ENCODE measurements at regions of chr1 and their contacts with region 1.

Region 1: GRCh38 chr1:110412576-110412975 is 5.1 kb upstream of the LAMTOR5 start:
- DNase-seq: peak; percentile 70 to 82
- ATAC-seq: peak in 3 of 4 donors; percentile 49 to 56 (median 51)
- H3K4me3 ChIP-seq: no peak overlapping the region
- H3K27ac ChIP-seq: no peak overlapping the region
- H3K4me1 ChIP-seq: peaks cover 20% of the 10 kb centered on the region
- H3K27me3 ChIP-seq: no peaks in the 10 kb centered on the region
- CTCF ChIP-seq: peak; percentile 61

Region 2: GRCh38 chr1:110380672-110381283 is 31.8 kb before region 1 on chr1:
- intact Hi-C with region 1: no loop called
- DNase-seq: no peak
- ATAC-seq: peak in 1 of 4 donors; percentile 56
- H3K4me3 ChIP-seq: no peak overlapping the region
- H3K27ac ChIP-seq: no peak overlapping the region
- H3K4me1 ChIP-seq: no peaks in the 10 kb centered on the region
- H3K27me3 ChIP-seq: no peaks in the 10 kb centered on the region
- CTCF ChIP-seq: no peak

Region 3: GRCh38 chr1:110455151-110455550 is 42.6 kb after region 1 on chr1:
- intact Hi-C with region 1: loop called (anchors 2 to 5 kb)
- DNase-seq: no peak
- ATAC-seq: no peak
- H3K4me3 ChIP-seq: no peak overlapping the region
- H3K27ac ChIP-seq: no peak overlapping the region
- H3K4me1 ChIP-seq: no peaks in the 10 kb centered on the region
- H3K27me3 ChIP-seq: peaks cover 0 to 13% (median 3%) of the 10 kb centered on the region in 3 donors
- CTCF ChIP-seq: no peak

Region 4: DNA sequence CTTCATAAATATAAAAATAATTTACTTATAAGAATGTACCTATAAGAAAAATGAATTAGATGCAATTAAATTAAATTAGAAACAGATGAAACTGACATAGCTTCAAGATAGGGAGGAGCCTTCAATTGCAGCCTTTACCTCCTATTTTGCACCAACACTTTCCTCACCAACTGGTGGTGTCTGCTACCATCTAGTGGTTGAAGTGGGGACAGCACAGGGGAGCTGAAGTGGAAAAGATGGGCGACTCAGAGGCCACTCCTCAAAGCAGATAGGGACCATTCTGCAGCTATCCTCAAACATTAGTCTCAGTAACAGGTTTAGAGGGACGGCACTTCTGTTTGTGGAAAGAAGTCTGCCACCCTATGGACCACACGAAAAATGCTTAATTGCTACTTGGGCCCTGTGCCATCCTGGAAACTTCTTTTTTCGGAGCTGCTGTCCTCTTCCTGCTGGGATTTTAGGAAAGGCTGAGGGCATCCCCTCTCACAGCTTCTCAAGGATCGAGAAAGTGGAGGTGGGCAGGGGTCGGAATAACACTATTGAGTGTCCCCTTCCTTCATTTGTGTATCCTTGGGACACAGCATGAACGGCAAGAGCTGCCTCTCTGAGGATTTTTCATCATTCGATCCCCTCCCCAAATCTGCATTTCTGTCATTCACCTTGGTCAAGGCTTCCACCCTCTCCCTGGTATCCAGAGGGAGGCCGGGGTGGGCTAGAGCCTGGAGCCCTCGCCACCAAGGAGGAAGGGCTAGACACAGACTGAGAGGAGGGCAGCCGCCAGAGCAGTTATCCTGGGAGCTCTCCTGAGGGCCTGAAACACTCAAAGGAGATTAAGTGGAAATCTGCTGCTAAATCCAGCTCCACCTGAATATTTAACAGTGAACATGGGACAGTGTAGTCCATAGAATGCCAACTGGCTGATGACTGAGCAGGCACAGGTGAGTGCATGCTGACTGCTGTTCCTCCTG is 48.0 kb after region 1 on chr1:
- intact Hi-C with region 1: loop called (anchors 2 to 5 kb)
- DNase-seq: peak; percentile 64 to 78
- ATAC-seq: peak; percentile 89 to 96 (median 93)
- H3K4me3 ChIP-seq: no peak overlapping the region
- H3K27ac ChIP-seq: no peak overlapping the region
- H3K4me1 ChIP-seq: no peaks in the 10 kb centered on the region
- H3K27me3 ChIP-seq: no peaks in the 10 kb centered on the region
- CTCF ChIP-seq: peak; percentile 98

Region 5: DNA sequence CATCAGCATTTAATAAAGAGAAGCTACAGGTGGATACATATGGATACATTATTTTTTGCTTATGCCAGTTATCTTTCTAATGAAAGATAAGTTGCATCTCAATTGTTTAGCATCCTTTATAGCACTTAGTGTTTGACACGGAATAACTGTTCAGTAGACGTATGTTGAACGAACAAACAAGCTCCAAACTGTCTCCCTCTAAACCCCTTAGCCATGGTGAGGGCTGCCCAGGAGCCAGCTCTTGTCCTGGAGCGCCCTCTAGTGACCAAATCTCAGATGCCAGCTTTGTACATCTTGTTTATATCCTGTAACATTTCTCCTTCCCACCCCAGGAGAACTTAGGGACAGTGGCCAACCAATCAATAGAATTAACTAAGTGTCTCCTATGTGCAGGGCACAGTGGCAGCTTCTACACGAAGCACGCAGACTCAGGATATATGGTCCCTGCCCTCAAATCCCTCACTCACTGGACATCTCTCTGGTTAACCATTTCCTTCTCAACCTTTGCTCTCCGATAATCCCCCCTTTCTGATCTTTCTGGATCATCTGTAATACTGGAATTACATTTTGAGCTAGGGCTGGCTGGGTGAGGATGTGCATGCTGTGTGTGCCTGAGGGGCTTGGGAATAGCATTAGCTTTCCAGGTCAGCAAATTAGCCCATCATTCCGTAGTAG is 83.5 kb after region 1 on chr1:
- intact Hi-C with region 1: loop called in 1 of 2 experiments (anchors 10 kb)
- DNase-seq: peak; percentile 70 to 79
- ATAC-seq: peak; percentile 78 to 95 (median 87)
- H3K4me3 ChIP-seq: no peak overlapping the region
- H3K27ac ChIP-seq: no peak overlapping the region
- H3K4me1 ChIP-seq: no peaks in the 10 kb centered on the region
- H3K27me3 ChIP-seq: no peaks in the 10 kb centered on the region
- CTCF ChIP-seq: peak; percentile 90